ENCODE measurements at regions of chr20 and their contacts with region 1.

Region 1: DNA sequence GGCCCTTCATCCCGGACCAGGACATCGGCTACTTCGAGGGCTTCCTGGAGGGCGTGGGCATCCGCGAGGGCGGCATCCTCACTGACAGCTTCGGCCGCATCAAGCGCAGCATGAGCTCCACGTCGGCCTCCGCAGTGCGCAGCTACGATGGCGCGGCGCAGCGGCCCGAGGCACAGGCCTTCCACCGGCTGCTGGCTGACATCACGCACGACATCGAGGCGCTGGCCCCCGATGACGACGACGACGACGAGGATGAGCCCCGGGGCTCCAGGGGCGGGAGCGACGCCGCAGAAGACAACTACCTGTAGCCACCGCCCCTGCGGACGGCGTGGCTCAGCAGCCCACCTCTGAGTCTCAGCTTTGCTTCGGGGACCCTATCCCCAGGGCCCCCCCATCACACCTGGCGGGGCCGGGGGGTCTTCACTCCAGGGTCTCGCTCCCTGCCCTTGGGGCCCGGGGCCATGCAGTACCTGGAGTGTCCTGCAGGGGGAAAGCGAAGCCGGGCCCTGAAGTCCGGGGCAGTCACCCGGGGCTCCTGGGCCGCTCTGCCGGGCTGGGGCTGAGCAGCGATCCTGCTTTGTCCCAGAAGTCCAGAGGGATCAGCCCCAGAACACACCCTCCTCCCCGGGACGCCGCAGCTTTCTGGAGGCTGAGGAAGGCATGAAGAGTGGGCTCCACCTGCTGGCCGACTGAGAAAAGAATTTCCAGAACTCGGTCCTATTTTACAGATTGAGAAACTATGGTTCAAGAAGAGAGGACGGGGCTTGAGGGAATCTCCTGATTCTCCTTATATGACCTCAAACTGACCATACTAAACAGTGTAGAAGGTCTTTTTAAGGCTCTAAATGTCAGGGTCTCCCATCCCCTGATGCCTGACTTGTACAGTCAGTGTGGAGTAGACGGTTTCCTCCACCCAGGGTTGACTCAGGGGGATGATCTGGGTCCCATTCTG is 20.8 kb upstream of the HCK start:
- DNase-seq: peak; percentile 86
- ATAC-seq: peak; percentile 81

Region 2: DNA sequence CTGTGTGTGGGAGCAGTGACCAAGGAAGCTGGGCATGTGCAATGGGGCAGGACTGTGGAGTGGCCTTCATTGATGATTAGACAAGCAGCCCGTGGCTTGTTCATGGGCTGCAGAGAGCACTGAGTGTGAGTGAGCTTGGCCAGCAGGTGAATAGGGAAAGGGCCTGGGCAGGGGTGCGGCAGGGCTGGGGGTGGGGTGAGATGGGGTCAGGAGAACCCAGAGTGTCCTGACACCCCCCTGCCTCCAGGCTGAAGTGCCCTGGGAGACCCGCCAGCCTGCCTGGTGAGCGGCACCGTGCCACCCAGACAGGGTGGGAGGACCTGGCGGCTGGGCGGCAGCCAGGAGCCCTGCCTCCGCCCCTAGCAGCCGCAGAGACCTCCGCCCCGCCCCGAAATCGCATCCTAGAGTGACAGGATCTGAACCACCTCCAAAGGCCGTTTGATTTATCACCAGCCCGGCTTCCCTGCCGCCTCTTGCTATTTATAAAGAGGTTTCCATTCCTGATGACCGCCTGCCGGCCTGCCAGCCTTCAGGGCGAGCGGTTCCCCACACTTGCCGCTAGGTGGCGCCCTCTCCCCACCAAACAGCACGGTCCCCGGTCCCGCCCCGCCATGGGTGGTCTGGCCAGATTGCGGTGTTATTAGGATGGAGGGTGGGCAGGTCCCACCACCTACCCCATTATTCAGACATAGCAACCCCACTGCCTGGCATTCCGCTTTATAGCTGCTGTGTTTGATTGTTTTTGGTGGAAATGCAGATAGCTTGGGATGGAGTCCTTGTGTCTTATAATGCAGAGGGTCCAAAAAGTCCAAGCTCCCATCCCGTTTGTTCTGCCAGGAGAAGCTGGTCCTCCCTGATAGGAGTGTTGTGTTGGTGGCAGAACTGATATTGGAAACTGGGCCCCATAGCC is 208.6 kb before region 1 on chr20:
- intact Hi-C with region 1: loop called (anchors 10 kb)
- DNase-seq: peak; percentile 89
- ATAC-seq: peak; percentile 90

Region 3: GRCh38 chr20:31859998-31860709 is 171.1 kb before region 1 on chr20:
- intact Hi-C with region 1: loop called (anchors 10 kb)
- DNase-seq: no peak
- ATAC-seq: peak; percentile 70

Region 4: DNA sequence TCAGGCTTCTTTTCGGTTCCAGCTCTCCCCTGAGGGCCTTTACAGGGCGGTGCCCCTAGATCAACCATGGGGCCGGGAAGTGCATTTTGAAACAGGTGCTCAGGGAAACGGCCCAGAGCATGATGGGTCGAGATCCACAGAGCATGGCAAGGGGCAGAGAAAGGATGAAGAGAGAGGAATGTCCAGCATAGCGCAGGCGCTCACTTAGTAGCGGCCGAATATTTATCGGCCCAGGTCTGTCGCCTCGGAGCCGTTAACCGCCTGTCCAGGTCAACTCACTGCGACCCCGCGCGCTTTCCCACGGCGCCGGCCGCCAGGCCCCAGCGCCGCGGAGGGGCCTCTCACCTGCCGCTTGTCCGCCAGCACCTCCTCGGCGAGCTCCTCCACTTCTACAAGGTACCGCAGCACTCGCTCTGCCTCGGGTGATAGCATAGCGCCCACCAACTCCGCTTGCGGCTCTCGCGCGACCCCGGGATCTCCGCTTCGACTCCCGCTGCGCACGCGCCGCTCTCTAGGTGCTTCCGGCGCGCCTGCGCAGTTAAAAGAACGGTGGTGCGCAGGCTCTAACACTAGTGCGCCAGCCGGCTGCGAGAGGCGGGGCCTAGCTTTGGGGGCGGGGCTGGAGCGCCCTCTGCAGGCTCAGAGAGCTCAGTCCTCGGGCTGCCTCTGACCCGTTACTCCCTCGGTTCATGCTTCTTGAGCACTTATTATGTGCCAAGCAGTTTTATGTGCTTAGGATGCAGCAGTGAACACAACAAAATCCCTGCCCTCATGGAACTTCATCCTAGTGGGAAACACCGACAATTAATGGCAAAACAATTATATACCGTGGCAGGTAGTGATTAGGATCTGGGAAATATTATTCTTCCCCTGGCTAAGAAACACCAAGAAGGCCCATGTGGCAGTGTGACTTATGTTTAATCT is 79.5 kb before region 1 on chr20 and contains the start of gene PDRG1:
- intact Hi-C with region 1: loop called (anchors 5 kb)
- DNase-seq: peak; percentile 98
- ATAC-seq: peak; percentile 99
- total RNA-seq, gene PDRG1: 11.1 TPM

Region 5: GRCh38 chr20:31962761-31963160 is 68.5 kb before region 1 on chr20:
- intact Hi-C with region 1: no loop called
- DNase-seq: no peak
- ATAC-seq: no peak

Region 6: DNA sequence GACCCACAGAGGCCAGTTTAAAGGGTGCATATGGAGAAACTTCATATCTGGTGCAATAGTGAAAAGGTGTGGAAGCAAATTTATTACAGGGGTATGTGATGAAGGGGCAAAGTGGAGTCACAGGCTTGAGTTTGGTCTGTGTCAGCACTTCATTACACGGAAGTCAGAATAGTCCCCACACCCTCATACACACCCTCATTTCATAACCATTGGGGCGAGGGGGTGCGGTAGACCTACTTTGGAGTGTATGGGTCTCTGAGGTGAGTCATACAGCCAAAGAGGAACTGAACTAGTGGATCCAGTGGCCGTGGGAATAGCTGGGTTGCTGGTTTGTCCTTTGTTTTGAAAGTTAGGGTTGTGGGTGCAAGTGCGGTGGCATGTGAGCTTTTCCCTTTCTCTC is 81.6 kb after region 1 on chr20:
- intact Hi-C with region 1: no loop called
- DNase-seq: peak; percentile 51
- ATAC-seq: no peak